A549 (cell line): ENCODE measurements at regions of chr9 and their contacts with region 1.

Region 1: GRCh38 chr9:113446323-113446740 is 17.2 kb upstream of the RGS3 start:
- DNase-seq: peak; percentile 52 to 77
- ATAC-seq: peak; percentile 50 to 79; a peak in 4 of 6 replicates
- H3K4me3 ChIP-seq: no peak overlapping the region
- H3K27ac ChIP-seq: no peak overlapping the region
- H3K4me1 ChIP-seq: no peaks in the 10 kb centered on the region
- CTCF ChIP-seq: peak; percentile 91
- EP300 ChIP-seq: no peak
- POLR2A ChIP-seq: no peak
- RAD21 ChIP-seq: peak; percentile 86 to 93

Region 2: GRCh38 chr9:112642126-112642525 is 804.2 kb before region 1 on chr9:
- CTCF ChIA-PET with region 1: no interaction called
- POLR2A ChIA-PET with region 1: no interaction called
- DNase-seq: no peak
- ATAC-seq: no peak
- H3K4me3 ChIP-seq: no peak overlapping the region
- H3K27ac ChIP-seq: no peak overlapping the region
- H3K4me1 ChIP-seq: no peaks in the 10 kb centered on the region
- CTCF ChIP-seq: no peak
- EP300 ChIP-seq: no peak
- POLR2A ChIP-seq: no peak
- RAD21 ChIP-seq: no peak

Region 3: GRCh38 chr9:113247640-113248039 is 198.7 kb before region 1 on chr9:
- CTCF ChIA-PET with region 1: no interaction called
- POLR2A ChIA-PET with region 1: no interaction called
- DNase-seq: no peak
- ATAC-seq: no peak
- H3K4me3 ChIP-seq: no peak overlapping the region
- H3K27ac ChIP-seq: no peak overlapping the region
- H3K4me1 ChIP-seq: no peaks in the 10 kb centered on the region
- CTCF ChIP-seq: no peak
- EP300 ChIP-seq: no peak
- POLR2A ChIP-seq: no peak
- RAD21 ChIP-seq: no peak

Region 4: DNA sequence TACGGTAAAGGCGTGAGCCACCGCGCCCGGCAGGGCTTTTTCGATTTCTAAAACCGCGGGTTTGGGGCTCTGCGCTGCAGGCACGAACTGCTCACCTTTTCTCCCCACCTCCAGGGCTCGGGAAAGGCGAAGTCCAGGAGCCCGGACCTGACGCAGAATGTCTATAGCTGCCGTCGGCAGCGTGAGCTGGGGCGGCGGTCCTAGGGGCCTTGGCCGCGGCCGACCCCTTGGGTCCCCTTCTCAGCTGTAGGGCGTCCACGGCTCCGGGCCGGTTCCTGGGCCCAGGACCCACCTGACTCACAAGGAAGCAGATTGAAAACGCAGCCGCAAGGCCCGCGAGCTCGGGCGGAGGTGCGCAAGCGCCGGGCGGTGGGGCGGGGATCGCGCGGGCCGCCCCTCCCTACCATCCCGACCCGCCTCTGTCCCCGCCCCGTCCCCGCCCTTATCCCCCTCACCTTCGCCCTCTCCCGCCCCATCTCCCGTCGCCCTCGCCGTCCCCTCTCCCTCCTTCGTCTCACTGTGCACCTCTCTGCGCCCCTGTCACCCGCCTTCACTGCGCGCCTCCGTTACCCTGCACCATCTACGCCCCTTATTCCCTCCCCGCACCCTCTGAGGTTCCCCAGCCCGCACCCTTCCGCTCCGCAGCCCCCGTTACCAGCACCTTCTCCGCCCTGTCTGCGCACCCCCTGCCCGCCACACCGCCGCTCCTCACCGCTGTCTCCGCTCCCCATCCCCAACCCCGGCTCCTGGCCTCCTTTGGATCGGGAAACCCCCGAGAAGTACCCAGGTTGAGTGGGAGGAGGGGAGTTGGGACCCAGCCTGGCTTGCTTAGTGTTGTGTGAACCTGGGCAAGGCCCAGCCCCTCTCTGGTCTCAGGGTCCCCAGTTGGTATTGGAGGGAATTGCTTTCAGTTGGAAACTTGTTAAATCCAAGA is 69.4 kb before region 1 on chr9 and contains the start of gene HDHD3:
- CTCF ChIA-PET with region 1: no interaction called
- POLR2A ChIA-PET with region 1: no interaction called
- DNase-seq: peak; percentile 87 to 92
- ATAC-seq: peak; percentile 90 to 95
- H3K4me3 ChIP-seq: peak within 1 kb of the TSS; percentile 58
- H3K27ac ChIP-seq: peak within 1 kb of the TSS; percentile 81 to 93
- H3K4me1 ChIP-seq: peaks cover 8% of the 10 kb centered on the region; the same call in 2 of the 3 replicates
- CTCF ChIP-seq: no peak
- EP300 ChIP-seq: no peak
- POLR2A ChIP-seq: peak; percentile 82
- RAD21 ChIP-seq: no peak
- polyA plus RNA-seq, gene HDHD3: 17.5 and 22.2 TPM in 2 replicates

Region 5: DNA sequence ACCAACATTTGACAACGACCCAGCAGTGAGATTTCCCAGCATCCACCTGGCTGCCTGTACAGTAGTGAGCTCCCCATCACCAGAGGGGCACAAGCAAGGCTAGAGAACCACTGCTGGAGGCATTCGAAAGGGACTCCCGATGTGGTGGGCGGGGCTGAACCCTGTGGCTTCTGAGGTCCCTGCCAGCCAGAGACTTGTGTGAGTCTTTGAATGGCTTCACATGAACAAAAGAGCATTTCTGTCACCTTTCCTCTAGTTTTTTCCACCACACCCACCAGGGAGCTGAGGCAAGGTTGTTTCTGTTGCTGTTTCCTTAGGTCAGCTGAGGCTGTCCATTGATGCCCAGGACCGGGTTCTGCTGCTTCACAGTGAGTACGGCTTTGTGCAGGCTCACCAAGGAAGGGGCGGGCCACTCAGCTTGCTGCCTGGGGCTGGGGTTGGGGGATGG is 32.9 kb after region 1 on chr9:
- CTCF ChIA-PET with region 1: interaction called, 13 read pairs
- POLR2A ChIA-PET with region 1: no interaction called
- DNase-seq: no peak
- ATAC-seq: no peak
- H3K4me3 ChIP-seq: no peak overlapping the region
- H3K27ac ChIP-seq: no peak overlapping the region
- H3K4me1 ChIP-seq: no peaks in the 10 kb centered on the region
- CTCF ChIP-seq: no peak
- EP300 ChIP-seq: no peak
- POLR2A ChIP-seq: no peak
- RAD21 ChIP-seq: no peak

Region 6: DNA sequence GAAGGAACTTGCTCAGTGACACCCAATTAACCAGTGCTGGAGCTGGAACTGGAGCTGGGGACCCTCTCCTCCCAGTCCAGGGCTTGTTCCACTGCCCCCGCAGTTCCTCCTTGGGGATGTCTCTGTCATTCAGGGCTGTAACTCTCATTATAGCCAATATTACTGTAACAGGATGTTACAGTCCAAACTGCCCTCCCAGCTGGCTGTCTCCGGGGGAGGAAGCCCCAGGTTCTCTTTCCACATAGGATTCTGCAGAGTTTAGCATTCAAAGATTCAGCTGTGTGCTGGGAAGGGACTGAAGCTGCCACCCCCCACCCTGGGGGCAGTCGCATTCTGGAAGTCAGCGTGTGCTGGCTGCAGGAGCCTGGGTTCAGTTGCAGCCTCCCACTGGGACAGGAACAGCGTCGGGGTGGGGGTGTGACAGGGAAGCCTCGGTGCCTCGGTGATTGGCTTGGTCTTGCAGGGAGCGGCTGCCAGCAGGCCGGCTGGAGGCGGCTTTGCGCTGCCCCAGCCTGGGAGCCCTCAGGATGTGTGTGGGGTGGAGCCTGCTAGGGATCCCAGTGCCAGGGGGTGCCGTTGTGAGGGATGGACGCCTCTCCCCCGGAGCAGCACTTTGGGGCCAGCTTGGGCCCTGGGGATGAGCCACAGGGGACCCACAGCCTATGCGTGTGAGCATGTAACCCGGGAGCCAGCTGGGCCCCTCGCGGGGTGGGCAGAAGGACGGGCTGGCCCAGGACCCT is 118.3 kb after region 1 on chr9:
- CTCF ChIA-PET with region 1: interaction called, 10 read pairs
- POLR2A ChIA-PET with region 1: no interaction called
- DNase-seq: no peak
- ATAC-seq: no peak
- H3K4me3 ChIP-seq: no peak overlapping the region
- H3K27ac ChIP-seq: peak overlapping the region in 1 of 2 experiments; percentile 28; a peak in 1 of 6 replicates
- H3K4me1 ChIP-seq: 0 out of 3 replicates have a peak, but pooled peaks cover 4% of the 10 kb centered on the region
- CTCF ChIP-seq: no peak
- EP300 ChIP-seq: no peak
- POLR2A ChIP-seq: no peak
- RAD21 ChIP-seq: no peak

Region 7: GRCh38 chr9:113664181-113664875 is 218.0 kb after region 1 on chr9:
- CTCF ChIA-PET with region 1: interaction called, 374 read pairs
- POLR2A ChIA-PET with region 1: no interaction called
- DNase-seq: no peak
- ATAC-seq: no peak
- H3K4me3 ChIP-seq: no peak overlapping the region
- H3K27ac ChIP-seq: no peak overlapping the region
- H3K4me1 ChIP-seq: no peaks in the 10 kb centered on the region
- CTCF ChIP-seq: no peak
- EP300 ChIP-seq: no peak
- POLR2A ChIP-seq: no peak
- RAD21 ChIP-seq: no peak

Region 8: DNA sequence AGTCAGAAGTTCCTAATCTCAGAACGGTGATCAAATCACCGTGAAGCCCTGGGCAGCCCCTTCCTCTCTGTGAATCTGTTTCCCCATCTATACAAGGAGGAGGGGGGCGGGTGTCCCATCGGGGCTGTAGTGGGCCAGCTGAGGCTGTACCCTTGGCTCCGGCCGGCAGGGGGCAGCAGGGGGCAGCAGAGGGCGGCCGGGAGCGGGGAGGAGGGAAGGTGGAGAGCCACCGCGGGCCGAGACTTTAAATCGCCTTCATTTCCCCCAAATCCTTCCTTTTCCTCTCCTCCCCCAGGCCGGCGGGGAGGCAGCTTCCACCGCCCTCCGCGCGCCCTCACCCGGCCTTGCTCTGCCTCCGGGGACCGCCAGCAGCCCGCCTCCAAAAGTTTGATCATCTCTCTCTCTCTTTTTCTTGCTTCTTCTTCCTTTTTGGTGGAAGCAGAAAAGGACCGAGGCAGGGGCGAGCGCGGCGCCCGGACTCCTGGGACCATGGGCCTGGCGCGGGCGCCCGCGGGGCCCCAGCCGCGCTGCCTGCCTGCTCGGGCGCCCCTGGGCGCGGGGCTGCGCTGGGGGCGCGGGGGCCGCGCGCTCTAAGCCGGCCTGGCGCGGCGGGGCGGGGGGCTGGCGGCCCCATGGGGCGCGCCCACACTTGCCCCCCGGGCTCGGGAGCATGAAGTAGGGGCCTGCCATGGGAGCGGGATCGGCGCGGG is 709.1 kb after region 1 on chr9 and contains the start of gene COL27A1:
- CTCF ChIA-PET with region 1: no interaction called
- POLR2A ChIA-PET with region 1: no interaction called
- DNase-seq: peak; percentile 76 to 82
- ATAC-seq: peak; percentile 80 to 90
- H3K4me3 ChIP-seq: peak within 1 kb of the TSS; percentile 92
- H3K27ac ChIP-seq: peak within 1 kb of the TSS; percentile 69 to 96
- H3K4me1 ChIP-seq: peaks cover 23% of the 10 kb centered on the region
- CTCF ChIP-seq: peak; percentile 81
- EP300 ChIP-seq: no peak
- POLR2A ChIP-seq: peak; percentile 39; the same call in 1 of the 2 replicates
- RAD21 ChIP-seq: peak; percentile 76 to 84
- polyA plus RNA-seq, gene COL27A1: 6.9 and 8.5 TPM in 2 replicates